ENCODE measurements at regions of chr2 and their contacts with region 1.

Region 1: GRCh38 chr2:45993476-45993991 is 303.7 kb upstream of the EPAS1 start:
- DNase-seq: peak; percentile 82
- H3K4me3 Mint-ChIP-seq: no peak overlapping the region
- H3K27ac Mint-ChIP-seq: no peak overlapping the region
- H3K4me1 Mint-ChIP-seq: peaks cover 3% of the 10 kb centered on the region
- H3K27me3 Mint-ChIP-seq: no peaks in the 10 kb centered on the region

Region 2: DNA sequence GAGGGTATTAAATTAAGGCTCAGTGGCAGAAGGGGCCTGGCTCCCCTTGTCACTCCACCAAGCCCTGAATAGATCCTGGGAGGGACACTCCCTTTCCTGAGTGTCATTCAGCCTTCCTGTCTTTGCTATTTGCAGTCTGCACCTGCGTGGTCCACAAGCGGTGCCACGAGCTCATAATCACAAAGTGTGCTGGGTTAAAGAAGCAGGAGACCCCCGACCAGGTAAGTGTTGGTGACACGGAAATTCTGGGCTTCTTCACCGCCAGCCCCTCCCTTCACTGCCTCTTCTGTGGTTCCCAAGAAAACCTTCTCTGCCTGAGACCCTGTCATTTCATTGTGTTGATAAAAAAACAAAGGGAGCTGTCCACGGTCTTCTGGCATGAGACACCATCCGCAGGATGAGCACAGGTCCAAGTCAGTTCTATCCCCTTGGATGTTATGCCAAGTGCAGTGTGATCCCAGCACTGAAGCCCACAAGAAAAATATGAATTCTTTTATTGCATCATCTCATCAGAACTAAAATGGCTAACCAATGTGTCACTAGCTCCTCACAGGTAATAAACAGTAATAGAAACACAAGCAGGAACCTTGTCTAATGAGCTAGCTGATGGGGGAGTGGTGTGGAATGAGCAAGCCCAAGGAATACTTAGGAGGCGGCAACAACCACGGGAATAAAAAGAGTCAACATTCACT is 13.2 kb before region 1 on chr2:
- CTCF ChIA-PET with region 1: interaction called, 13 read pairs
- POLR2A ChIA-PET with region 1: no interaction called
- DNase-seq: no peak
- H3K4me3 Mint-ChIP-seq: no peak overlapping the region
- H3K27ac Mint-ChIP-seq: no peak overlapping the region
- H3K4me1 Mint-ChIP-seq: peaks cover 7% of the 10 kb centered on the region
- H3K27me3 Mint-ChIP-seq: no peaks in the 10 kb centered on the region

Region 3: DNA sequence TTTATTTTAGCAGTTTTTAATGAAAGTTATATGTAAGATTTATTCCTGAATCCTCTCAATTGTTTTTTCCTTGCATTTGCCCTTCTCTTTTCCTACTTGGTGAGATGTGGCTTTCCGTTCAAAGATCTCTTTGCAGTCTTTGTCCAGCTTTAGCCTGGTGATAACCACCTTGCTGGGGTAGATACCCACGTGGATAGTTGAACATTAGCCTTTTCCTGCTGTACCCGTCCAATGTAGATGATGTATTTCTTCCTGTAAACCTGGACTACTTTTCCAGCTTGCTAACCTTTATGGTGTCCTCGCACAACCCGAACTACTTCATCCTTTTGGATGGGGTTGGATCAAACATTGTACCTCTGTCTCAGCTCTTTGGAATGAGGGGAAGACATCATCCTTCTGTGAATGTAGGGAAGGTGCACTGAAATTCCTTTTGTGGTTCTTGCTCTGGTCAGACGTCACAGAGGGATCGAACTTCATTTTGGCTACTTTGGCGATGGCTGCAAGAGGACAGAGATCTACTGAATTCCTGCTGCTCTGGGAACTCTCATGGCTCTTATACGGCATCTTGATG is 10.5 kb after region 1 on chr2:
- CTCF ChIA-PET with region 1: interaction called, 11 read pairs
- POLR2A ChIA-PET with region 1: no interaction called
- DNase-seq: no peak
- H3K4me3 Mint-ChIP-seq: no peak overlapping the region
- H3K27ac Mint-ChIP-seq: no peak overlapping the region
- H3K4me1 Mint-ChIP-seq: peaks cover 4% of the 10 kb centered on the region
- H3K27me3 Mint-ChIP-seq: no peaks in the 10 kb centered on the region

Measured in activated CD4-positive, alpha-beta T cell treated with anti-CD3 and anti-CD28 coated beads, Interleukin-2, amount 10 ng/mL, durations not matched to agents 7 days and 5 days (primary cell).